Activated B cell treated with CpG ODN at 0.5 μM for 24 hours (primary cell): ENCODE measurements at regions of chr2 and their contacts with region 1.

Region 1: DNA sequence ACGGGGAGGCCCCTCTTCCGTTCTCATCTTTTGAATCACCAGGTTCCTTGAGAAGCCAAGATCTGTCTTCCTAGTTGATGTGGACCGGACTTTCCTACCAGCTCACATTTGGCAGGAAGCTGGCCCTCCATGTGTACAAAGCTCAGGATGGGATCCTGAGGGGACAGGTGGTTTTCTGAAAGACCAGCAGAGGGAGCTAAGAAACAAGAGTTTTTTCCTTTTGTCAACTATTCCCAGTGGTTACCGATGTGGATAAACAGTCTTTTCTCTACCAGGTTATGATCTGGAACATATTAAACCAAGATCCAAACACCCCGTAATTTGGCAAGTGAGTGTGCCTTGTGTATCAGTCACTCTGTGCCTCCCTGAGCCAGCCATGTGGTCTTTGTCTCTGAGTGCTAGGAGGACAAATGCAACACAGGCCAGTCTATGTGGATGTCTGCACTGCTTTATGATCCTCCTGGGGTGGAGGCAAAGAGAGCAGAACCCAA is 25.1 kb upstream of the ARHGAP25 start:
- DNase-seq: no peak
- ATAC-seq: peak; percentile 71
- H3K4me3 Mint-ChIP-seq: no peak overlapping the region
- H3K27ac Mint-ChIP-seq: peak overlapping the region; percentile 6
- H3K4me1 Mint-ChIP-seq: peaks cover 39% of the 10 kb centered on the region
- H3K27me3 Mint-ChIP-seq: no peaks in the 10 kb centered on the region
- CTCF ChIP-seq: peak; percentile 51

Region 2: GRCh38 chr2:68689553-68690537 is 19.6 kb before region 1 on chr2:
- CTCF ChIA-PET with region 1: interaction called, 21 read pairs
- POLR2A ChIA-PET with region 1: interaction called, 6 read pairs
- intact Hi-C with region 1: no loop called
- DNase-seq: no peak
- ATAC-seq: peak; percentile 79
- H3K4me3 Mint-ChIP-seq: peak overlapping the region; percentile 59
- H3K27ac Mint-ChIP-seq: peak overlapping the region; percentile 91
- H3K4me1 Mint-ChIP-seq: peaks cover 40% of the 10 kb centered on the region
- H3K27me3 Mint-ChIP-seq: no peaks in the 10 kb centered on the region
- CTCF ChIP-seq: no peak

Region 3: GRCh38 chr2:68734688-68735525 is 25.4 kb after region 1 on chr2 and contains the start of gene ARHGAP25:
- CTCF ChIA-PET with region 1: interaction called, 57 read pairs
- POLR2A ChIA-PET with region 1: interaction called, 39 read pairs
- intact Hi-C with region 1: no loop called
- DNase-seq: peak; percentile 45
- ATAC-seq: peak; percentile 74
- H3K4me3 Mint-ChIP-seq: no peak within 1 kb of the TSS
- H3K27ac Mint-ChIP-seq: no peak within 1 kb of the TSS
- H3K4me1 Mint-ChIP-seq: peaks cover 37% of the 10 kb centered on the region
- H3K27me3 Mint-ChIP-seq: no peaks in the 10 kb centered on the region
- CTCF ChIP-seq: no peak
- total RNA-seq, gene ARHGAP25: 324 and 336 TPM in 2 replicates

Region 4: GRCh38 chr2:68774569-68775271 is 65.3 kb after region 1 on chr2:
- CTCF ChIA-PET with region 1: interaction called, 10 read pairs
- POLR2A ChIA-PET with region 1: interaction called, 19 read pairs
- intact Hi-C with region 1: loop called (anchors 1 kb)
- DNase-seq: peak; percentile 71
- ATAC-seq: peak; percentile 78
- H3K4me3 Mint-ChIP-seq: peak overlapping the region; percentile 98
- H3K27ac Mint-ChIP-seq: peak overlapping the region; percentile 96
- H3K4me1 Mint-ChIP-seq: peaks cover 82% of the 10 kb centered on the region
- H3K27me3 Mint-ChIP-seq: no peaks in the 10 kb centered on the region
- CTCF ChIP-seq: no peak

Region 5: GRCh38 chr2:68837164-68837860 is 127.8 kb after region 1 on chr2:
- CTCF ChIA-PET with region 1: interaction called, 18 read pairs
- POLR2A ChIA-PET with region 1: interaction called, 5 read pairs
- intact Hi-C with region 1: loop called (anchors 1 kb)
- DNase-seq: peak; percentile 53
- ATAC-seq: peak; percentile 33
- H3K4me3 Mint-ChIP-seq: no peak overlapping the region
- H3K27ac Mint-ChIP-seq: peak overlapping the region; percentile 74
- H3K4me1 Mint-ChIP-seq: peaks cover 57% of the 10 kb centered on the region
- H3K27me3 Mint-ChIP-seq: no peaks in the 10 kb centered on the region
- CTCF ChIP-seq: no peak